H1 (cell line): ENCODE measurements at regions of chr3 and their contacts with region 1.

Region 1: DNA sequence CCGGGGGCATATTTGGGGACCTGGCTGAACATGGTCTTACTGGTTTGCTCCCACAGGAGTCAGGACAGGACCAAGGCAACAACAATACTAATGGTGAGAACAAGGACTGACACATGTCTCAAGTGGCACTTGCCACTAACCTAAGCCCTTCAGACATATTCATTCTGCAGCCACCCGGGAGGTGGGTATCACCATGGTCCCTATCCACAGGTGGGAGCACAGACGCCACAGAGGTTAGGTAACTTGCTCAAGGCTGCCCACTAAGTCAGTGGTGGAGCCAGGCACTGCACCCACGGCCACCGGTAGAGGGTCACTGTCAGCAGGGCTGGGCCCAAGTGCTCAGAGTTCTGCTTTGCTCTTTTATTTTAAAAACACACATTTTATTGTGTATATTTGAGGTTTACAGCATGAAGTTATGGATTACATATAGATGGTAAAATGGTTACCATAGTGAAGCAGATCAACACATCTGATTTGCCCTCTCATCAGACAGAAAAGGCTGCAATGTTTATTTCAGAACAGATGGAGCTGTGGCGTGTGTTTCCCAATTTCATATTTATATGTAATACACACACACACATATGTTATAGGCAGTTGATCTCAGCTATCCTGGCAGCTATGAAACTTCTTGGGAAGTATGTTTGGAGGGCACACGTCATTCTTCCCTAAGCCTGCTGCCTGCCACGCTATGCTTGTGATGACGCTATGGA is 30.0 kb upstream of the SLC41A3 start:
- DNase-seq: no peak
- H3K4me3 ChIP-seq: no peak overlapping the region
- H3K27ac ChIP-seq: no peak overlapping the region
- H3K4me1 ChIP-seq: no peaks in the 10 kb centered on the region
- H3K27me3 ChIP-seq: no peaks in the 10 kb centered on the region
- CTCF ChIP-seq: peak in 2 of 3 experiments; percentile 57 to 66; a peak in 3 of 4 replicates
- EP300 ChIP-seq: no peak
- POLR2A ChIP-seq: no peak
- RAD21 ChIP-seq: peak; percentile 54 to 56; a peak in 3 of 4 replicates

Region 2: GRCh38 chr3:126064627-126065258 is 49.1 kb before region 1 on chr3:
- CTCF ChIA-PET with region 1: no interaction called
- POLR2A ChIA-PET with region 1: no interaction called
- DNase-seq: no peak
- H3K4me3 ChIP-seq: no peak overlapping the region
- H3K27ac ChIP-seq: no peak overlapping the region
- H3K4me1 ChIP-seq: no peaks in the 10 kb centered on the region
- H3K27me3 ChIP-seq: no peaks in the 10 kb centered on the region
- CTCF ChIP-seq: no peak
- EP300 ChIP-seq: no peak
- POLR2A ChIP-seq: no peak
- RAD21 ChIP-seq: no peak

Region 3: GRCh38 chr3:126124148-126124868 is 10.4 kb after region 1 on chr3:
- CTCF ChIA-PET with region 1: interaction called, 30 read pairs
- POLR2A ChIA-PET with region 1: interaction called, 3 read pairs
- DNase-seq: peak in 1 of 2 experiments; percentile 69
- H3K4me3 ChIP-seq: 0 out of 8 replicates have a peak overlapping the region, but pooled peaks of 1 of the 4 experiments have one; percentile 15
- H3K27ac ChIP-seq: no peak overlapping the region
- H3K4me1 ChIP-seq: peaks cover 0 to 11% (median 6%) of the 10 kb centered on the region in 4 experiments; a peak in 5 of 7 replicates
- H3K27me3 ChIP-seq: no peaks in the 10 kb centered on the region
- CTCF ChIP-seq: peak in 1 of 3 experiments; percentile 10; a peak in 1 of 4 replicates
- EP300 ChIP-seq: no peak
- POLR2A ChIP-seq: no peak
- RAD21 ChIP-seq: no peak; a peak in 1 of 4 replicates